Left cardiac atrium (tissue), 4 donors: ENCODE measurements at regions of chr10 and their contacts with region 1.

Region 1: GRCh38 chr10:31759799-31760626 is 168.6 kb downstream of the ARHGAP12 start:
- DNase-seq: peak; percentile 97
- ATAC-seq: peak; percentile 95 to 96

Region 2: DNA sequence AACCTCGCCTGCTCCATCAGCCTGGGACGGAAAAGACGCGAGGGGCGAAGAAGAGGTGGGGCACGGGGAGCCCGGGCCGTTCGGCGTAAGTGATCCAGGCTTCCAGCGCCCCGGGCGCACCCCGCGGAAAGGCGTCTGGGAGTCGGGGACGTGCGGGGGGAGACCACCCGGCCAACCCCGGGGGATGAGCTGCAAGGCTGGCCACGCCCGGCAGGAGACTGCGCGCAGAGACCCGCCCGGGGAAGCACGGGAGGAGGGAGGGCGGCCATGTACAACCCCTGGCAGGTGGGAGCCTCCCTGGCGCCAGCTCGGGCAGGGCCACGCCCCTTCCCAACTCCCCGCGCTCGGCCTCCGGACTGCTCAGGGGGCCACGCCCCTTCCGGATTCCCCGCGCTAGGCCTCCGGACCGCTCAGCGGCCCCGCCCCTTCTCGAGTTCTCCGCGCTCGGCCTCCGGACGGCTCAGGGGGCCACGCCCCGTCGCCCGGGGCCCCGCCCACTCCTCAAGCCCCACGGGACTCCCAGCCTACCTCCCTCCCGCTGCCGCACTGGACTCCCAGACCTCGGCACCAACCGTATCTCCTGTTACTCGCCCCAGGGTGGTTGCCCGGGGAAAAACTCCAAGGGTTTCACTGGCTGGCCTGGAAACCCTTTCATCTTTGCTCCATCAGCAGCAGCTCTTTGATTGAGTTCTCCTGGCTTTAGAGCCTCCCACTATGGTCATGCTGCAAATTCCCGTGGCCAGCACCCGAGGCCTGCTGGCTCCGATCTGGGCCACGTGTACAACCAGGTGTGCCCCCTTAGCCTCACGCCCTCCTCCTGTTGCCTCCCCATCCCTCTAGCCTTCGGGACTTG is 156.6 kb before region 1 on chr10:
- intact Hi-C with region 1: loop called in 1 of 2 experiments (anchors 10 kb)
- DNase-seq: peak; percentile 97
- ATAC-seq: peak; percentile 95 to 97